Activated CD8-positive, alpha-beta memory T cell treated with anti-CD3 and anti-CD28 coated beads, Interleukin-2, amount 10 ng/mL, durations not matched to agents 7 days and 5 days (primary cell): ENCODE measurements at regions of chr17 and their contacts with region 1.

Region 1: DNA sequence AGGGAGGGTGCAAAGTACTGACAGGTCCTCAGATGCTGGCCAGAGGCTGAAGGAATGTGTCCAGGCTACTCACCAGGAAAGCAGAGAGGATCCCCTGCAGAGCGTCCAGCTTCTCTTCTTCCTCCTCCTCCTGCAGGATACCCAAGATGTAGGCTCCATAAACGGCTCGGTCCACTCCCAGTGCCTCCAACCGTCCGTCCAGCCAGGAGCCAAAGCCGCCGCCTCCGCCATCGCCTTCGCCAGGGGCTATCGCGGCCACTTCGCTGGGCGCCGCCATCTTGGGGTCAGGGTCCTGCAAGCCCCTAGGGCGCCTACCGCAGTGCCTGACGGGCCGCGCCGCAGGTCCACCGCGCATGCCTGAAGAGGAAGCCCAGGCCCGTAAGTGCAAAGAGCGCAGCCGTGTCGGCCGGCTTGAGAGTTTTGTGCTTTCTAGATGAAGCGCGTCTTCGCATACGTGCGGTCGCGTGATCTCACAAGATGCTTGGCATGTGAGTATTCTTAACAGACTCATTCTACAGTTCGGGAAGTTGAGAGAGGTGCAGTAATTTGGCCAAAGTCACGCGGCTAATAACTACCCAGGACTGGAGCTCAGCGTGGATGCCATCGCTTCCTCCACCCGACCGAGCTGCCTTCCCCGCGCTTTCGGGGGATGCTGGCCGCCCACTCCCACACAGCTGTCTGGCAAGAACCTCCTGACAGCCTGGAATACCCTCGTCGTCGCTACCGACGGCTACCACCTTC is at the start of gene CCDC43:
- DNase-seq: peak; percentile 95
- ATAC-seq: peak; percentile 99
- H3K4me3 Mint-ChIP-seq: peak within 1 kb of the TSS; percentile 95
- H3K27ac Mint-ChIP-seq: peak within 1 kb of the TSS; percentile 87
- H3K4me1 Mint-ChIP-seq: peaks cover 34% of the 10 kb centered on the region
- H3K27me3 Mint-ChIP-seq: no peaks in the 10 kb centered on the region
- total RNA-seq, gene CCDC43: 26.0 to 28.4 TPM

Region 2: DNA sequence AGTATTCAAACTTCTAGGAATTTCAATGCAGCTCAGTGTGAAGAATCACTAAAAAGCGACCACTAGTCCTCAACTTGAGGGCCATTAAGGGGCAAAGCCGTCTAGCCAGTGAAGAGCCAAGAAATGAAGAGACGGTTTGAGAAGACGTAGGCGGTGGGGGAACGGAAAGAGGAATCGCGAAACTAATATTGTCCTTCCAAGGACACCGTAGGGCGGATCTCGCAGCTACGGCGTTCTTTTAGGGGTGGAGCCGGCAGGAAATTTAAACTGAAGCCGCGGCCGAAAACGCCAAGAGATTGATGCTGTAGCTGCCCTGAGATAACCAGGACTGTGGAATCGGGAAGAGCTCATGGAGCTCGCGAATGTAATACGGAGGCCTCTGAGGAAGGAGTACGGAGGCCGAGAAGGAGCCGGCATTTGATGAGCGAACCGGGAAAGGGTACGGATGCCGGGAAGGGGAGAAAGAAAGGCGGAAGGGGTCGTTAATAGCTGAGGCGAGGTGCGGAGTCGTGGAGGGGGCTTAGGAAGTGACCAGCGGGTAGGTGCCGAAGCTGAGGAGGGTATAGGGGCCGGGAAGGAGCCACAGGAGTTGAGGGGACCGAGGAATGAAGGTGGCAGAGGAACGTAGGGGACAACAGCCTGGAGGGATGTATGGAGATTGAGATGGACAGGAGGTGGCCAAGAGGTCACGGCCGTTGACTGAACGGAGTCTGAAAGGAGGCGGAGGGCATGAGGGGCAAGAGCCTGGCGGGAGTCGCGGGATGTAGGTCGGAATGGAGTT is 18.9 kb after region 1 on chr17 and contains the start of gene DBF4B:
- CTCF ChIA-PET with region 1: interaction called, 11 read pairs
- DNase-seq: peak; percentile 90
- ATAC-seq: peak; percentile 94
- H3K4me3 Mint-ChIP-seq: no peak within 1 kb of the TSS
- H3K27ac Mint-ChIP-seq: no peak within 1 kb of the TSS
- H3K4me1 Mint-ChIP-seq: peaks cover 8% of the 10 kb centered on the region
- H3K27me3 Mint-ChIP-seq: peaks cover 6% of the 10 kb centered on the region
- total RNA-seq, gene DBF4B: 43.8 to 53.2 TPM

Region 3: GRCh38 chr17:44733753-44734152 is 44.1 kb after region 1 on chr17:
- CTCF ChIA-PET with region 1: no interaction called
- DNase-seq: no peak
- ATAC-seq: no peak
- H3K4me3 Mint-ChIP-seq: no peak overlapping the region
- H3K27ac Mint-ChIP-seq: no peak overlapping the region
- H3K4me1 Mint-ChIP-seq: no peaks in the 10 kb centered on the region
- H3K27me3 Mint-ChIP-seq: no peaks in the 10 kb centered on the region